Stomach (tissue), 19 donors: ENCODE measurements at regions of chr16 and their contacts with region 1.

Region 1: DNA sequence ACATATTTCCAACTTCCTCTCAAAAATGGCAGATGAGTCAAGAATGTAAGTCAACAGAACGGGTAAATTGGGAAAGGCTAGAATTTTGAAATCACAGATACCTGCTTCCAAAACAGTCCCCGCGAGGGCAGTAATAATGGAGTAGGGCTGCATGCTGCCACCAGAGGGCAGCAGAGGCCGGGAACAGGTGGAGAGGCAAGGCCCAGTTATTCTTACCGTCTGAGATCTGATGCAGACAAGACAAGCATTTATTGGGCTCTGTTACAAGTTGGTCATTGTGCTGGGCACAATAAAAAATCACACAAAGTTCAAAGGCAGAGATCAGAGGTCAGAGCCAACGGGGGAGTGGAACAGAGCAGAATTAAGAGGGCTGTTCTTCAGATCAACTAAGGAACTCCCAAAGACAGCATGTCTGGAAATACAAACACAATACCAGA is 8.8 kb upstream of the MLKL start:
- DNase-seq: peak; percentile 88 to 92
- H3K4me3 ChIP-seq: no peak overlapping the region
- H3K27ac ChIP-seq: peak overlapping the region in 1 of 5 donors; percentile 4
- H3K4me1 ChIP-seq: peaks cover 0 to 4% (median 0%) of the 10 kb centered on the region in 4 donors
- H3K27me3 ChIP-seq: no peaks in the 10 kb centered on the region
- CTCF ChIP-seq: peak in 5 of 7 experiments; percentile 90 to 97 (median 92)
- EP300 ChIP-seq: no peak
- POLR2A ChIP-seq: no peak

Region 2: GRCh38 chr16:74868501-74868900 is 159.0 kb after region 1 on chr16:
- intact Hi-C with region 1: loop called (anchors 5 kb)
- DNase-seq: peak in 1 of 2 donors; percentile 47
- H3K4me3 ChIP-seq: no peak overlapping the region
- H3K27ac ChIP-seq: peak overlapping the region in 2 of 5 donors; percentile 38 to 43
- H3K4me1 ChIP-seq: peaks cover 0 to 5% (median 0%) of the 10 kb centered on the region in 4 donors
- H3K27me3 ChIP-seq: no peaks in the 10 kb centered on the region
- CTCF ChIP-seq: no peak
- EP300 ChIP-seq: no peak
- POLR2A ChIP-seq: no peak